Breast epithelium (tissue), 4 donors: ENCODE measurements at regions of chr7 and their contacts with region 1.

Region 1: DNA sequence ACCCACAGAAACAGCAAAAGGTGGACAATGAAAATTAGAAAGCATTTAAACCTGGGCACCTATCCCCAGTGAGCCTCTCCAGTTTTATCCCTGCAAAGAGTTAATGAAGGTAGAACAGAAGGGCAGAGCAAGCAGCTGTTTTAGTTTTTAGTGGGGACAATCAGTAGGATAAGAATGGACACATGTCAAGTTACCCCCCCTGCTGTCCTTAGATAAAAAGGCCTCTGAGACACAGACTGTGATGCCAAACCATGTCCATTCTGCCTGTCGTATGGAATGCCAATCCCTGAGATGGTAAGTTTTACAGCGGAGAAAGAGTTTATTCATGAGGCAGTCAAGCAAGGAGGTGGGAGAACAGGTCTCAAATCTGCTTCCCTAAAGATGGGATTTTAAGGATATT is 162.6 kb upstream of the AGR3 start:
- DNase-seq: no peak
- H3K4me3 ChIP-seq: no peak overlapping the region
- H3K27ac ChIP-seq: no peak overlapping the region
- H3K4me1 ChIP-seq: no peaks in the 10 kb centered on the region
- H3K27me3 ChIP-seq: no peaks in the 10 kb centered on the region
- CTCF ChIP-seq: no peak
- POLR2A ChIP-seq: no peak

Region 2: GRCh38 chr7:16978358-16979244 is 65.8 kb before region 1 on chr7:
- intact Hi-C with region 1: no loop called
- DNase-seq: no peak
- H3K4me3 ChIP-seq: no peak overlapping the region
- H3K27ac ChIP-seq: no peak overlapping the region
- H3K4me1 ChIP-seq: peaks cover 0 to 3% of the 10 kb centered on the region in 2 donors
- H3K27me3 ChIP-seq: no peaks in the 10 kb centered on the region
- CTCF ChIP-seq: no peak
- POLR2A ChIP-seq: no peak

Region 3: DNA sequence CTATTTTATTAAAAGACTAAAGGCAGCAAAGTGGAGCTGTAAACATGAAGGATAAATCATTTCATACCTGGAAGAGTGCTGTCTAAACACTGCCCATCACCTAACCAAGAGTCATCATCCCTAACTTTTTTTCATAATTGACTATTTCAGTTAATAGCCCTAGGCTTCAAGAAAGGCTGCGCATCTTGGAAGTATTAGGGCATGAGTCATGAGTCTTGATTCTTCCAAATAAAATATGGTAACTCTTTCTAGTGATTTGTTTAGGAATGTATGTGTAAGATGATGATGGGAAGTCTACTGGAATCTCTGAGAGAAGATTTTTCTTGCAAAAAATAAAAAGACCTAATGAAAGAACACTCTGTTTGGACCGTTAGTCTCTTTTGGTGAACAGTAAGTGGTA is 46.3 kb after region 1 on chr7:
- intact Hi-C with region 1: loop called (anchors 2 kb)
- DNase-seq: no peak
- H3K4me3 ChIP-seq: no peak overlapping the region
- H3K27ac ChIP-seq: no peak overlapping the region
- H3K4me1 ChIP-seq: no peaks in the 10 kb centered on the region
- H3K27me3 ChIP-seq: no peaks in the 10 kb centered on the region
- CTCF ChIP-seq: no peak
- POLR2A ChIP-seq: no peak

Region 4: GRCh38 chr7:17109017-17109416 is 64.6 kb after region 1 on chr7:
- intact Hi-C with region 1: no loop called
- DNase-seq: no peak
- H3K4me3 ChIP-seq: no peak overlapping the region
- H3K27ac ChIP-seq: no peak overlapping the region
- H3K4me1 ChIP-seq: no peaks in the 10 kb centered on the region
- H3K27me3 ChIP-seq: no peaks in the 10 kb centered on the region
- CTCF ChIP-seq: no peak
- POLR2A ChIP-seq: no peak